ENCODE measurements at regions of chr5 and their contacts with region 1.

Region 1: DNA sequence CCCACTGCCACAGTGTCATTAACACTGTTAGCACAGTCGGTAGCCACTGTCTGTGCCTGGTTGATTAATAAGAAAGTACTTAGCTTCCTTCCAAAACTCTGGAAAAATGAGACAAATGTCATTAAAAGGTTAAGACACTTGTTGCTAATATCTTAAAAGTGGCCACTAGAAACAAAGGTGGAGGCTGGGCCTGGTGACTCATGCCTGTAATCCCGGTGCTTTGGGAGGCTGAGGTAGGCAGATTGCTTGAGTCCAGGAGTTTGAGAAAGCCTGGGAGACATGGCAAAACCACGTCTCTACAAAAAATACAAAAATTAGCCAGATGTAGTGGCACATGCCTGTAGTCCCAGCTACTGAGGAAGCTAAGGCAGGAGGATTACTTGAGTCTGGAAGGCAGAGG is 194.1 kb downstream of the PDZD2 start:
- DNase-seq: no peak
- ATAC-seq: peak; percentile 91
- H3K4me3 ChIP-seq: no peak overlapping the region
- H3K27ac ChIP-seq: no peak overlapping the region
- H3K4me1 ChIP-seq: no peaks in the 10 kb centered on the region
- H3K27me3 ChIP-seq: no peaks in the 10 kb centered on the region
- CTCF ChIP-seq: no peak

Region 2: GRCh38 chr5:32076699-32077695 is 244.0 kb after region 1 on chr5:
- intact Hi-C with region 1: loop called (anchors 10 kb)
- DNase-seq: peak in 1 of 4 donors; percentile 70
- ATAC-seq: peak; percentile 76
- H3K4me3 ChIP-seq: no peak overlapping the region
- H3K27ac ChIP-seq: no peak overlapping the region
- H3K4me1 ChIP-seq: no peaks in the 10 kb centered on the region
- H3K27me3 ChIP-seq: no peaks in the 10 kb centered on the region
- CTCF ChIP-seq: peak; percentile 53 to 77

Measured in left lung (tissue), 14 donors.